ENCODE measurements at regions of chr5 and their contacts with region 1.

Region 1: GRCh38 chr5:150486402-150487198 is 21.3 kb upstream of the NDST1 start:
- DNase-seq: peak; percentile 89
- H3K4me3 Mint-ChIP-seq: peak overlapping the region; percentile 61
- H3K27ac Mint-ChIP-seq: peak overlapping the region; percentile 32
- H3K4me1 Mint-ChIP-seq: peaks cover 48% of the 10 kb centered on the region
- H3K27me3 Mint-ChIP-seq: no peaks in the 10 kb centered on the region
- CTCF ChIP-seq: no peak

Region 2: GRCh38 chr5:150469718-150470469 is 16.7 kb before region 1 on chr5:
- CTCF ChIA-PET with region 1: interaction called, 12 read pairs
- intact Hi-C with region 1: no loop called
- DNase-seq: peak; percentile 46
- H3K4me3 Mint-ChIP-seq: no peak overlapping the region
- H3K27ac Mint-ChIP-seq: no peak overlapping the region
- H3K4me1 Mint-ChIP-seq: peaks cover 25% of the 10 kb centered on the region
- H3K27me3 Mint-ChIP-seq: no peaks in the 10 kb centered on the region
- CTCF ChIP-seq: no peak

Region 3: DNA sequence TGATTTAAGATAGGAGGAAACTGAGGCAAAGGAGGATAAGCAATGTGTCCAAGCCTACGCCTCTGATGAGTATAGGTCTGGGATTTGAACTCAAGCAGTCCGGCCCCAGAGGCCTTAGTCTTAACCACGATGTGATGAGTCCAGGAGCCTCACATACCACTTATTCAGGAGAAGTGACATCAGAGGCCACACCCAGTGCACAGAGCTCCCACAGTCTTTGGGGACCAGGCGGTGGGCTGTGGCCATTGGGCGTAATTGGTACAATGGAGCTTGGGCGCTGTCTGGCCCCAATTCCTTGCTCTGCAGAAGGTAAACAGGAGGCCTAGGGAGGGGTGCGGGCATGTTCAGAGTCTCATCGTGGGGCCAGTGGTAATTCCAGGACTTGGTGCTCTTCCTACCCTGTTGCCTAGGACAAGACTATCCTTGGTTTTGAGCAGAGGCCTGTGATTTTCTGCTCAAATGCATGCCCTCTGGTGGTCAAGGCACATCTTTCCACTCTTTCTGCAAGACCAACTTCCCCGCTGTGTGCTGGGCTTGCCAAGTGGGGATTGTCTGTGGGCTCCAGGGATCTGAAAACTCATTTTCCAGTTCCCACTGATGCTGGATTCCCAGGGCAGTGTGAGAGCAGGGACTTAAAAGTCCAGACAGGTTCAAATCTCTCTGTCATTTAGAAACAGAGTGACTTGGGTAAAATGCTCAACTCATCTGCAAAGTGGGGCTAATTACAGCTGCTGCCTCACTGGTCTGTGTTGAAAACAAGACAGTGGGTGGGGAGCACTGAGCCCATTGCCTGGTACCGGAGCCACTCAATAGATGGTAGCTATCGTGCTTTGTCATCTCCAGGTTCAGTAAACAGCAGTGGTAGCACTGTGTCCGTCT is 37.1 kb after region 1 on chr5:
- CTCF ChIA-PET with region 1: interaction called, 3 read pairs
- intact Hi-C with region 1: loop called (anchors 5 kb)
- DNase-seq: peak; percentile 52
- H3K4me3 Mint-ChIP-seq: no peak overlapping the region
- H3K27ac Mint-ChIP-seq: no peak overlapping the region
- H3K4me1 Mint-ChIP-seq: peaks cover 25% of the 10 kb centered on the region
- H3K27me3 Mint-ChIP-seq: no peaks in the 10 kb centered on the region
- CTCF ChIP-seq: peak; percentile 63